Activated CD8-positive, alpha-beta T cell treated with anti-CD3 and anti-CD28 coated beads for 36 hours (primary cell): ENCODE measurements at regions of chr19 and their contacts with region 1.

Region 1: GRCh38 chr19:11924886-11925650 is at the start of gene ZNF700:
- DNase-seq: peak; percentile 99
- ATAC-seq: peak; percentile 94
- H3K4me3 Mint-ChIP-seq: peak within 1 kb of the TSS; percentile 93
- H3K27ac Mint-ChIP-seq: peak within 1 kb of the TSS; percentile 99
- H3K4me1 Mint-ChIP-seq: peaks cover 39% of the 10 kb centered on the region
- H3K27me3 Mint-ChIP-seq: no peaks in the 10 kb centered on the region
- CTCF ChIP-seq: no peak
- total RNA-seq, gene ZNF700: 12.0 to 14.0 TPM

Region 2: DNA sequence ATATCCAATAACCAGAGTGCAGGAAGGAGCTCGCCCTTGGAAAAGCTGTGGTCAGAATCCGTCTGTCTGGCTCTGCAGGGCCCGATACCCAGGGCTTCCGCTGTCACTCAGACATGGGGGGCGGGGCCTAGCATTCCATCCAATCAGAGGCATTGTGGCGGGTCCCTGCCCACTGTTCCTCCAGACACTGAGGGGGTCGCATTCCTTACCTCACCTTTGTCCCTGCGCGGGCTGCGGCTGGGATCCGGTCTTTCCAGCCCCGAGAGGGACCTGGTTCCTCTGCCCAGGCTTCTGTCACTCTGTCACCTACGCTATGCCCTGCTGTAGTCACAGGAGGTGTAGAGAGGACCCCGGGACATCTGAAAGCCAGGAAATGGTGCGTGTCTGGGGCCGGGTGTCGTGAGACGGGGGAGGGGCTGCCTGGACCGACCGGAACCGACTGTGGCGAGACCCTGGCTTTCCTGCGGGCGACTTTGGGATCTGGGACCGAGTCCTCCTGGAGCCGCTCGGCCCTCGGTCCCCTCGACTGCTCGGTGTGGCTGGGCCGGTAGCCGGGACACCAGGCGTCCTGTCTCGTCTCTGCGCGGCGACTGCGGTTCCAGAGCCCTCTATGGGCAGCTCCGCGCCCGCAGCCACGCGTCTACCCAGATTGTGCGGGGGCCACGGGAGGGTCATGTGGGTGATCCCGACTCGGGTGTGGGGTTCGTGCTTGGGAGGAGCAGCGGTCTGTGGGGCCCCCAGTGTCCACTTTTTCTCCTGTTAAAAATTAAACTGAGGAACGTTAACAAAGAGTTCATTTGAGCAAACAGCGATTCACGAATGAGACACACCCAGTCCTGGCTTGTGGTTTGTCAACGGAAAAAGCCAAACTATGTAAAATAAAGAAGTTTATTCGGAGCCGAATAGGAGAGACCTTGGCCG is 37.2 kb before region 1 on chr19 and contains the start of gene ZNF69:
- CTCF ChIA-PET with region 1: interaction called, 11 read pairs
- POLR2A ChIA-PET with region 1: no interaction called
- intact Hi-C with region 1: no loop called
- DNase-seq: peak; percentile 83
- ATAC-seq: peak; percentile 91
- H3K4me3 Mint-ChIP-seq: peak within 1 kb of the TSS; percentile 91
- H3K27ac Mint-ChIP-seq: peak within 1 kb of the TSS; percentile 87
- H3K4me1 Mint-ChIP-seq: peaks cover 21% of the 10 kb centered on the region
- H3K27me3 Mint-ChIP-seq: no peaks in the 10 kb centered on the region
- CTCF ChIP-seq: peak; percentile 20
- total RNA-seq, gene ZNF69: 1.8 to 3.1 TPM

Region 3: DNA sequence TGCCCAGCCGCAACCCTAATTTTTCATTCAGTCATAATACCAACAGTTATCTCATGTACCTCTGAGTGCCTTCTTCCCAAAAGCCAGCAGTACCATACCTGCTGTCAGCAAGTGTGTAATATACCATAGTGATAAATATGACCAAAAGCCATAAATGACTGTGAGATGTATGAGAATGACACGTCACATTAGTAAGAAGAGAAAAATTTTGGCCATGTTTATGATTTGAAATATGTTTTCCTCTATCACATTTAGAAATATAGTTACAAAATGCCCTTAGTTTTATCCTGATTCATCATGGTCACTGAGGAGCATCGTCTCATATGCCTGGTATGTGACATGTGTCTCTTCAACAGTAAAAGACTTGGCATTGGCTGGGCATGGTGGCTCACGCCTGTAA is 11.4 kb before region 1 on chr19:
- CTCF ChIA-PET with region 1: interaction called, 12 read pairs
- POLR2A ChIA-PET with region 1: no interaction called
- intact Hi-C with region 1: no loop called
- DNase-seq: no peak
- ATAC-seq: no peak
- H3K4me3 Mint-ChIP-seq: no peak overlapping the region
- H3K27ac Mint-ChIP-seq: no peak overlapping the region
- H3K4me1 Mint-ChIP-seq: no peaks in the 10 kb centered on the region
- H3K27me3 Mint-ChIP-seq: no peaks in the 10 kb centered on the region
- CTCF ChIP-seq: no peak

Region 4: DNA sequence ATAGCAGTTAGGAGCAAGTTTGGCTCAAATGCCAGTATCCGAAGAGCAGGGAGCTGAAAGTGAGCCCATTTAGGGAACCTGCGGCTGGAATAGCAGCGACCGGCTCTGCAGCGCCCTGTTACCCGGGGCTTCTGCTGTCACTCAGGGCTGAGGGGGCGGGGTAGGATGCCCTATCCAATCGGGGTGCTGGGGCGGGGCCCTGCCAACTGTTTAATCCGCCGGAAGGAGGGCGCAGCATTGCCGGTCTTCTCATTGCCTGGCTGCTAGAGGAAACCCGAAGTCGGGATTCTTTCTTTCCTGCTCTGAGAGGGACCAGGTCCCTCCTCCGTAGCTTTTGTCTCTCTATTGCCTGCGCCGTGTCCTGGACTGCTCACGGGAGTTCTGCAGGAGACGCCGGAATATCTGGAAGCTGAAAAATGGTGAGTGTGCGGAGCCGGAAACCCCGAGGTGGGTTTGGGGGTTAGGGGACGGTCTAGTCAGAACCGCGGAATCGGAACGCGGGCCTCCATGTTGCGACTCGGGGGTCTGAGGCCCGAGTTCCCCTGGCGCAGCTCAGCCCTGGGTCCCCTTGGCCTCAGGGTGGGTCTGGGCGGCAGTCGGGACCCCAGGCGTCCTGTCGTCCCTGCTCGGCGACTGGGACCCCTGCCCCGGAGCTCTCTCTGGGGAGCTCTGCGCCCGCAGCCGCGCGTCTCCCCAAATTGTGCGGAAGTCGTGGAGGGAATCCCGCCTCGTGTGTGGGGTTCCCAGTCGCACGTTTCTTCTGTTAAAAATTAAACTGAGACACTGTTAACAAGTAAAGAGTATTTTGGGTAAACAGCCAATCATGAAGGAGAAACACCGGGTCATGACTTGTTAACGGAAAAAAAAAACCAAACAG is 62.6 kb after region 1 on chr19:
- CTCF ChIA-PET with region 1: interaction called, 88 read pairs
- POLR2A ChIA-PET with region 1: interaction called, 15 read pairs
- intact Hi-C with region 1: loop called (anchors 2 kb)
- DNase-seq: peak; percentile 99
- ATAC-seq: peak; percentile 97
- H3K4me3 Mint-ChIP-seq: peak overlapping the region; percentile 94
- H3K27ac Mint-ChIP-seq: peak overlapping the region; percentile 97
- H3K4me1 Mint-ChIP-seq: peaks cover 31% of the 10 kb centered on the region
- H3K27me3 Mint-ChIP-seq: no peaks in the 10 kb centered on the region
- CTCF ChIP-seq: no peak

Region 5: GRCh38 chr19:12092065-12092867 is 167.2 kb after region 1 on chr19:
- CTCF ChIA-PET with region 1: interaction called, 19 read pairs
- POLR2A ChIA-PET with region 1: no interaction called
- intact Hi-C with region 1: no loop called
- DNase-seq: peak; percentile 90
- ATAC-seq: peak; percentile 92
- H3K4me3 Mint-ChIP-seq: peak overlapping the region; percentile 83
- H3K27ac Mint-ChIP-seq: peak overlapping the region; percentile 92
- H3K4me1 Mint-ChIP-seq: peaks cover 10% of the 10 kb centered on the region
- H3K27me3 Mint-ChIP-seq: peaks cover 6% of the 10 kb centered on the region
- CTCF ChIP-seq: no peak